BJ (cell line): ENCODE measurements at regions of chr4 and their contacts with region 1.

Region 1: DNA sequence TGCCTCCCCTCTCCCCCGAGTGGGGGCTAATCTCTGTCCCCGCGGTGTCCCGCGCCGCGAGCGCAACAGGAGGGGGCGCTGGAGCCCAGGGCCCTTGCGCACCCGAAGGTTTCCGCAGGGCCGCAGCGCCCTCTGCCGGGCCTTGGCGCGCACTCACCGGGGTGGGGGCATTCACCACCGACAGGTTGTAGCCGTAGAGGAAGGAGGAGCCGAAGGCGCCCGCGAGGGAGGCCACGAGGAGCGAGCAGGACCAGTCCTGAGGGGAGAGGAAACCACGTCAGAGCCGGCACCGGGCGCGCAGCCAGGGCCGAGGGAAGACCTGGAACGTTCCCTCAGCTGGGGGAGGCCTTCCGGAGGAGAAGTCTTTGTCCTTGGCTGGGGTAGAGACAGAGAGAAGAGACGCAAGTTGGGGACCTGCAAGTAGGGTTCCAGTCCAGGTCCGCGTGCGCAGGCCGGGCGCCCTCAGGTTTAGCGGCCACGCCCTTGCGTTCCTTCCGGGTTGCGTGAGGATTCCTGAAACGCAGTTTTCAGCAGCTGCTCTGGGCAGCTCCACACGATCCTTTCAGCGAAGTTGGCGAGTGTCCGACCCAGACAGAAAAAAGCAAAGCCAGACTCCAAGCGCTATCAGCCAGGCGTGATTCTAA is 2.4 kb downstream of the SLC2A9 start:
- DNase-seq: peak; percentile 76
- H3K4me3 ChIP-seq: peak overlapping the region; percentile 47
- H3K27me3 ChIP-seq: no peaks in the 10 kb centered on the region
- CTCF ChIP-seq: peak; percentile 100

Region 2: DNA sequence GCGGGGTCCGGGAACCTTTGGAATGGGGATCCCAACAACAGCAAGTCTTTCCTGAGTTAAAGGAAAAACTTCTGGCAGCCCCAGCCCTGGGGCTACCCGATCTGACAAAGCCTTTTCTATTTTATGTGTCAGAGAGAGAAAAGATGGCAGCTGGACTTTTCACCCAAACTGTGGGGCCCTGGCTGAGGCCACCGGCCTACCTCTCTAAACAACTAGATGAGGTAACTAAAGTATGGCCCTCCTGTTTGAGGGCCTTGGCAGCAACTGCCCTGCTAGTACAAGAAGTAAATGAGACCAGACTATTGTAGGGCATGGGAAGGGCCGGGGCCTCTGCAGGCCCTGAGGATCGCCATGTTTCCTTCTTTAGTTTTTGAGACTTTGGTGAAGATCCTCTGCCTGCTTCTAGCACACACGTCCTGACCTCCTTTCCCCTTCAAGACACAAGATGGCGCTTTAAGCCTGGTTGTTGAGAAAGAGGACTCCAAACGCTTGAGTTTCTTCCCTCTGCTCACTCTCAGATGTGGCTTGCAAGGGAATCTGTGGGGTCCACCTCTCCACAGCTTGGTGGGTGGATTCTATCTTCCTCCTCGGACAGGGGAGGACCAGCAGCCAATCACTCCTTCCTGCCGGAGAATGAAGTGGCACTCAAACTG is 256.0 kb before region 1 on chr4:
- CTCF ChIA-PET with region 1: interaction called, 59 read pairs
- POLR2A ChIA-PET with region 1: no interaction called
- DNase-seq: no peak
- H3K4me3 ChIP-seq: no peak overlapping the region
- H3K27me3 ChIP-seq: no peaks in the 10 kb centered on the region
- CTCF ChIP-seq: peak; percentile 72

Region 3: GRCh38 chr4:10033191-10033881 is 14.4 kb after region 1 on chr4:
- CTCF ChIA-PET with region 1: interaction called, 21 read pairs
- POLR2A ChIA-PET with region 1: no interaction called
- DNase-seq: no peak
- H3K4me3 ChIP-seq: no peak overlapping the region
- H3K27me3 ChIP-seq: no peaks in the 10 kb centered on the region
- CTCF ChIP-seq: no peak